CD8-positive, alpha-beta T cell (primary cell): ENCODE measurements at regions of chr11 and their contacts with region 1.

Region 1: GRCh38 chr11:6757373-6757967 is 14.3 kb downstream of the OR2AG2 start:
- DNase-seq: peak; percentile 30 to 82 (median 65)
- ATAC-seq: peak; percentile 80
- H3K4me3 ChIP-seq: no peak overlapping the region
- H3K4me3 Mint-ChIP-seq: no peak overlapping the region
- H3K27ac ChIP-seq: no peak overlapping the region
- H3K27ac Mint-ChIP-seq: no peak overlapping the region
- H3K4me1 ChIP-seq: no peaks in the 10 kb centered on the region
- H3K4me1 Mint-ChIP-seq: peaks cover 15% of the 10 kb centered on the region
- H3K27me3 ChIP-seq: no peaks in the 10 kb centered on the region
- H3K27me3 Mint-ChIP-seq: no peaks in the 10 kb centered on the region
- CTCF ChIP-seq: peak; percentile 74

Region 2: DNA sequence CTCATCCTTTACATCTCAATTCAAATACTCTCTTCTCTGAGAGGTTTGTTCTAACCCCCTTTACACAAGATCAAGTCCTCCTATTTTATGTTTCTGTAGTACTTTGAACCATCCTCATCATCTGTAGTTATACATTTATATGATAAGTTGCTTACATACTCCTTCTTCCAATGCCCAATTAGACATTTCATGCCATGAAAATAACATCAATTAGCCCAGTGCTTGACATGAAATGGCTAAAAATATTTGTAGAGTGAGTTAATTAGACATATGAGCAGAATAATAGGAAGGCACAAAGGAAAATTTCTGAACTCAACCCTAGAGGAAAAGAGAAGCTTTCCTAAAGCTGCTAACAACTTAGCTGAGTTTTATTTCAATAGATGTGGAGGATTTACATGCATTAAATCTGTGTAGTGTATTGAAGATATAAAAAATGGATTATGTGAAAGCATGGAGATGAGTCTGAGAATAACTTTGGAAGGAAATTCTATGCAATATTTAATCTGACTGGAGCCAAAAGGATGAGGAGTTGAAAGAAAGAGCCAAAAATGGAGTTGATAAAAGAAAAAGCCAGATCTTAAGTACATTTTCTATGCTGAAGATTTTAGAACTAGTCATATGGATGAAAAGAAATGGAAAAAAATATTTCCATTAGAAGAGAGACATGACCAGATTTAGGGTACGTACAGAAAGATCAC is 726.6 kb before region 1 on chr11 and contains the start of gene OR56A1:
- CTCF ChIA-PET with region 1: no interaction called
- POLR2A ChIA-PET with region 1: no interaction called
- intact Hi-C with region 1: loop called in 1 of 2 experiments (anchors 5 kb)
- DNase-seq: no peak
- ATAC-seq: no peak
- H3K4me3 ChIP-seq: no peak within 1 kb of the TSS
- H3K4me3 Mint-ChIP-seq: no peak within 1 kb of the TSS
- H3K27ac ChIP-seq: no peak within 1 kb of the TSS
- H3K27ac Mint-ChIP-seq: no peak within 1 kb of the TSS
- H3K4me1 ChIP-seq: no peaks in the 10 kb centered on the region
- H3K4me1 Mint-ChIP-seq: no peaks in the 10 kb centered on the region
- H3K27me3 ChIP-seq: peaks cover 0 to 2% of the 10 kb centered on the region in 2 experiments
- H3K27me3 Mint-ChIP-seq: peaks cover 16% of the 10 kb centered on the region
- CTCF ChIP-seq: no peak
- total RNA-seq, gene OR56A1: not detected

Region 3: GRCh38 chr11:6402561-6402981 is 354.9 kb before region 1 on chr11:
- CTCF ChIA-PET with region 1: no interaction called
- POLR2A ChIA-PET with region 1: no interaction called
- intact Hi-C with region 1: no loop called
- DNase-seq: peak; percentile 46 to 95 (median 77)
- ATAC-seq: peak; percentile 76
- H3K4me3 ChIP-seq: peak overlapping the region; percentile 25 to 53
- H3K4me3 Mint-ChIP-seq: peak overlapping the region; percentile 77
- H3K27ac ChIP-seq: peak overlapping the region; percentile 77 to 84
- H3K27ac Mint-ChIP-seq: peak overlapping the region; percentile 94
- H3K4me1 ChIP-seq: peaks cover 95% of the 10 kb centered on the region
- H3K4me1 Mint-ChIP-seq: peaks cover 96% of the 10 kb centered on the region
- H3K27me3 ChIP-seq: no peaks in the 10 kb centered on the region
- H3K27me3 Mint-ChIP-seq: no peaks in the 10 kb centered on the region
- CTCF ChIP-seq: no peak

Region 4: GRCh38 chr11:6603287-6604080 is 154.0 kb before region 1 on chr11 and contains the starts of genes ILK and RRP8:
- CTCF ChIA-PET with region 1: interaction called, 5 read pairs
- POLR2A ChIA-PET with region 1: no interaction called
- intact Hi-C with region 1: loop called (anchors 2 to 5 kb)
- DNase-seq: peak; percentile 66 to 92 (median 87)
- ATAC-seq: peak; percentile 78
- H3K4me3 ChIP-seq: peak within 1 kb of the TSS; percentile 93 to 97
- H3K4me3 Mint-ChIP-seq: no peak within 1 kb of the TSS
- H3K27ac ChIP-seq: peak within 1 kb of the TSS; percentile 65 to 88
- H3K27ac Mint-ChIP-seq: no peak within 1 kb of the TSS
- H3K4me1 ChIP-seq: peaks cover 60% of the 10 kb centered on the region
- H3K4me1 Mint-ChIP-seq: peaks cover 40% of the 10 kb centered on the region
- H3K27me3 ChIP-seq: no peaks in the 10 kb centered on the region
- H3K27me3 Mint-ChIP-seq: no peaks in the 10 kb centered on the region
- CTCF ChIP-seq: no peak
- total RNA-seq, gene ILK: 26.6 to 31.6 TPM
- total RNA-seq, gene RRP8: 29.1 to 31.3 TPM

Region 5: GRCh38 chr11:6719576-6719975 is 37.9 kb before region 1 on chr11:
- CTCF ChIA-PET with region 1: interaction called, 119 read pairs
- POLR2A ChIA-PET with region 1: interaction called, 3 read pairs
- intact Hi-C with region 1: no loop called
- DNase-seq: no peak
- ATAC-seq: no peak
- H3K4me3 ChIP-seq: no peak overlapping the region
- H3K4me3 Mint-ChIP-seq: no peak overlapping the region
- H3K27ac ChIP-seq: no peak overlapping the region
- H3K27ac Mint-ChIP-seq: peak overlapping the region; percentile 76
- H3K4me1 ChIP-seq: peaks cover 49% of the 10 kb centered on the region
- H3K4me1 Mint-ChIP-seq: peaks cover 91% of the 10 kb centered on the region
- H3K27me3 ChIP-seq: no peaks in the 10 kb centered on the region
- H3K27me3 Mint-ChIP-seq: no peaks in the 10 kb centered on the region
- CTCF ChIP-seq: no peak

Region 6: GRCh38 chr11:6746086-6746618 is 11.3 kb before region 1 on chr11:
- CTCF ChIA-PET with region 1: interaction called, 447 read pairs
- POLR2A ChIA-PET with region 1: interaction called, 16 read pairs
- intact Hi-C with region 1: loop called in 1 of 2 experiments (anchors 1 kb)
- DNase-seq: peak in 8 of 9 experiments; percentile 26 to 82 (median 55)
- ATAC-seq: peak; percentile 84
- H3K4me3 ChIP-seq: peak overlapping the region; percentile 61 to 65
- H3K4me3 Mint-ChIP-seq: no peak overlapping the region
- H3K27ac ChIP-seq: peak overlapping the region; percentile 69 to 89
- H3K27ac Mint-ChIP-seq: no peak overlapping the region
- H3K4me1 ChIP-seq: peaks cover 57% of the 10 kb centered on the region
- H3K4me1 Mint-ChIP-seq: peaks cover 46% of the 10 kb centered on the region
- H3K27me3 ChIP-seq: no peaks in the 10 kb centered on the region
- H3K27me3 Mint-ChIP-seq: no peaks in the 10 kb centered on the region
- CTCF ChIP-seq: no peak

Region 7: DNA sequence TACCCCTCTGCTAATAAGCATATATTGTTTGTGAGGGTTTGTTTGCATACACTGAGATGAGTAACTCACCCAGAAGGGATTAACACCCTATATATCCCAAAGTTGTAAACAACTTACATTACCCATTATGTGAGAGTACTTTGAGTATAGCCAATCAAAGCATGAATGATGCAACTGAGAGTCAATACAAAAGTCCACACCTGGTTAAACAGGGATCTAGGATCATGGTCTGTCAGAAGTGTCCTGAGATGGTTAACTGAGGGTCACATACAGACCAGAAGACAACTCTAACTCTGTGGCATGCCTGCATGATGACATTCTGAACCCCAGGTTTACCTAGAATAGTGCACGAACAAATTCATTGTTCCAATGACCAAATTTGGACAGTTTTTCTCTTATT is 70.6 kb after region 1 on chr11:
- CTCF ChIA-PET with region 1: no interaction called
- POLR2A ChIA-PET with region 1: no interaction called
- intact Hi-C with region 1: no loop called
- DNase-seq: no peak
- ATAC-seq: no peak
- H3K4me3 ChIP-seq: no peak overlapping the region
- H3K4me3 Mint-ChIP-seq: no peak overlapping the region
- H3K27ac ChIP-seq: no peak overlapping the region
- H3K27ac Mint-ChIP-seq: no peak overlapping the region
- H3K4me1 ChIP-seq: no peaks in the 10 kb centered on the region
- H3K4me1 Mint-ChIP-seq: no peaks in the 10 kb centered on the region
- H3K27me3 ChIP-seq: peaks cover 0 to 3% of the 10 kb centered on the region in 2 experiments
- H3K27me3 Mint-ChIP-seq: peaks cover 8% of the 10 kb centered on the region
- CTCF ChIP-seq: no peak

Region 8: GRCh38 chr11:8688414-8689362 is 1931.2 kb after region 1 on chr11:
- CTCF ChIA-PET with region 1: no interaction called
- POLR2A ChIA-PET with region 1: no interaction called
- intact Hi-C with region 1: loop called in 1 of 2 experiments (anchors 10 kb)
- DNase-seq: peak; percentile 51 to 90 (median 80)
- ATAC-seq: peak; percentile 78
- H3K4me3 ChIP-seq: peak overlapping the region; percentile 78 to 79
- H3K4me3 Mint-ChIP-seq: peak overlapping the region; percentile 93
- H3K27ac ChIP-seq: peak overlapping the region; percentile 71 to 83
- H3K27ac Mint-ChIP-seq: peak overlapping the region; percentile 93
- H3K4me1 ChIP-seq: peaks cover 29% of the 10 kb centered on the region
- H3K4me1 Mint-ChIP-seq: peaks cover 41% of the 10 kb centered on the region
- H3K27me3 ChIP-seq: no peaks in the 10 kb centered on the region
- H3K27me3 Mint-ChIP-seq: no peaks in the 10 kb centered on the region
- CTCF ChIP-seq: no peak